Naive thymus-derived CD8-positive, alpha-beta T cell (primary cell): ENCODE measurements at regions of chr17 and their contacts with region 1.

Region 1: GRCh38 chr17:35242805-35243560 is at the start of gene SLFN5:
- DNase-seq: peak; percentile 82 to 98 (median 94)
- ATAC-seq: peak; percentile 75 to 86
- H3K4me3 Mint-ChIP-seq: peak within 1 kb of the TSS; percentile 93 to 100 (median 99)
- H3K27ac Mint-ChIP-seq: peak within 1 kb of the TSS; percentile 97 to 100 (median 99)
- H3K4me1 Mint-ChIP-seq: peaks cover 36 to 75% (median 59%) of the 10 kb centered on the region in 4 donors
- H3K27me3 Mint-ChIP-seq: no peaks in the 10 kb centered on the region
- polyA plus RNA-seq, gene SLFN5: 73.8 to 161 (median 87.4) TPM

Region 2: DNA sequence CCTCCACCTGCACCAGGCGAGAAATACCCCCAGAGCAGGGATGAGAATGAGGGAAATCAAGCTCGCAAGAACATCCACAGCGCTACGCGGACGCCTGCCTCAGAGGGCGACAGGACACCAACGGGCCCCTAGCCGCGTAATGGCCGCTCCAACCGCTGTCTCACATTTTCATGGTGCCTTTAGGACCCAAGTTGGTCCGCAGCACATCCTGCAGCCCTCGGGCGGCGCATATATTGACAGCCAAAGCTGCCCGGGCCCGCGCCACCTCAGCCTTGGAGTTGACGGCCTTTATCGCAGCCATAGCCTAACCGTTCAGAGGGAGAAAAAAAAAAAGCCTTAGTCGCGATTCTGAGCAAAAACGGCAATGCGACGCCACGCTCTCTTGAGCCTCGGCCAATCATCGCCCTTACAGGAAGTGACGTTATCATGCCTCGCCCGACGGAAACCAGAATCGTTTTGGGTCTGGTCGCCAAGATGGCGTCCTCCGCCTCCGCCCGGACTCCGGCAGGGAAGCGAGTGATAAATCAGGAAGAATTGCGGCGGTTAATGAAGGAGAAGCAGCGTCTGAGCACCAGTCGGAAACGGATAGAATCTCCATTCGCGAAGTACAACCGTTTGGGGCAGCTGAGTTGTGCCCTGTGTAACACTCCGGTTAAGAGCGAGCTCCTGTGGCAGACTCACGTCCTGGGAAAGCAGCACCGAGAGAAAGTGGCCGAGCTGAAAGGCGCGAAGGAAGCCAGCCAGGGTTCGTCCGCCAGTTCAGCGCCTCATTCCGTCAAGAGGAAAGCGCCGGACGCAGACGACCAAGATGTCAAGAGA is 281.7 kb before region 1 on chr17 and contains the starts of genes CCT6B and ZNF830:
- POLR2A ChIA-PET with region 1: no interaction called
- DNase-seq: peak; percentile 75 to 96 (median 90)
- ATAC-seq: peak; percentile 89 to 90
- H3K4me3 Mint-ChIP-seq: peak within 1 kb of the TSS; percentile 95 to 100 (median 100)
- H3K27ac Mint-ChIP-seq: peak within 1 kb of the TSS; percentile 99 to 100 (median 100)
- H3K4me1 Mint-ChIP-seq: peaks cover 31 to 34% (median 32%) of the 10 kb centered on the region in 4 donors
- H3K27me3 Mint-ChIP-seq: peaks cover 1 to 9% (median 8%) of the 10 kb centered on the region in 5 donors
- polyA plus RNA-seq, gene CCT6B: 0.35 to 2.4 (median 1.3) TPM
- polyA plus RNA-seq, gene ZNF830: 17.4 to 27.6 (median 18.7) TPM

Region 3: GRCh38 chr17:35170968-35171771 is 71.8 kb before region 1 on chr17:
- POLR2A ChIA-PET with region 1: interaction called, 102 read pairs
- DNase-seq: peak in 8 of 10 donors; percentile 13 to 79 (median 49)
- ATAC-seq: peak; percentile 79 to 87
- H3K4me3 Mint-ChIP-seq: peak overlapping the region; percentile 48 to 84 (median 60)
- H3K27ac Mint-ChIP-seq: peak overlapping the region; percentile 55 to 96 (median 91)
- H3K4me1 Mint-ChIP-seq: peaks cover 23 to 51% (median 48%) of the 10 kb centered on the region in 4 donors
- H3K27me3 Mint-ChIP-seq: no peaks in the 10 kb centered on the region

Region 4: GRCh38 chr17:35214631-35215273 is 28.2 kb before region 1 on chr17:
- POLR2A ChIA-PET with region 1: interaction called, 371 read pairs
- DNase-seq: peak in 8 of 10 donors; percentile 9 to 66 (median 26)
- ATAC-seq: peak; percentile 44 to 50
- H3K4me3 Mint-ChIP-seq: peak overlapping the region; percentile 64 to 91 (median 84)
- H3K27ac Mint-ChIP-seq: peak overlapping the region; percentile 94 to 98 (median 97)
- H3K4me1 Mint-ChIP-seq: peaks cover 47 to 89% (median 88%) of the 10 kb centered on the region in 4 donors
- H3K27me3 Mint-ChIP-seq: no peaks in the 10 kb centered on the region

Region 5: GRCh38 chr17:35286120-35286781 is 43.3 kb after region 1 on chr17:
- POLR2A ChIA-PET with region 1: interaction called, 11 read pairs
- DNase-seq: peak in 7 of 10 donors; percentile 15 to 62 (median 40)
- ATAC-seq: peak; percentile 99
- H3K4me3 Mint-ChIP-seq: peak overlapping the region; percentile 14 to 64 (median 44)
- H3K27ac Mint-ChIP-seq: peak overlapping the region; percentile 77 to 94 (median 87)
- H3K4me1 Mint-ChIP-seq: peaks cover 26 to 58% (median 50%) of the 10 kb centered on the region in 4 donors
- H3K27me3 Mint-ChIP-seq: no peaks in the 10 kb centered on the region

Region 6: DNA sequence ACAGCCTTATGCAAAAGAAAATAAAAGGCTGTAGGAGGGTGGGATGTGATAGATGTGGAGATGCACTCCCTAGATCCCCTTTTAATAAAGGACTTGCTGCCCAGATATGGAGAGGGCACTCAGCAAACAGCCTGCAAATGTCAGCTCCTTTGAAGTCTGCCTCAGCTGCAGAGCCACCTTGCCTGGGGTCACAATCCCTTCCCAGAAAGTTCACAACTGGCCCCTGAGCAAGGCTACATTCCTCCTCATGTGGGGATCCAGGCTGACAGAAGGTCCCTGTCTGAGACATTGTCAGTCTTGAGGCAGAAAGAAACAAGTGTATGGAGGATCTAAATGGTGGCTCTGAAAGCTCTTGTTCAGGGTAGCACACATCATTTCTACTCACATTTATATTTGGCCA is 94.4 kb after region 1 on chr17:
- POLR2A ChIA-PET with region 1: no interaction called
- DNase-seq: no peak
- ATAC-seq: no peak
- H3K4me3 Mint-ChIP-seq: no peak overlapping the region
- H3K27ac Mint-ChIP-seq: peak overlapping the region in 2 of 10 donors; percentile 5 to 9
- H3K4me1 Mint-ChIP-seq: peaks cover 16 to 23% (median 17%) of the 10 kb centered on the region in 4 donors
- H3K27me3 Mint-ChIP-seq: no peaks in the 10 kb centered on the region

Region 7: DNA sequence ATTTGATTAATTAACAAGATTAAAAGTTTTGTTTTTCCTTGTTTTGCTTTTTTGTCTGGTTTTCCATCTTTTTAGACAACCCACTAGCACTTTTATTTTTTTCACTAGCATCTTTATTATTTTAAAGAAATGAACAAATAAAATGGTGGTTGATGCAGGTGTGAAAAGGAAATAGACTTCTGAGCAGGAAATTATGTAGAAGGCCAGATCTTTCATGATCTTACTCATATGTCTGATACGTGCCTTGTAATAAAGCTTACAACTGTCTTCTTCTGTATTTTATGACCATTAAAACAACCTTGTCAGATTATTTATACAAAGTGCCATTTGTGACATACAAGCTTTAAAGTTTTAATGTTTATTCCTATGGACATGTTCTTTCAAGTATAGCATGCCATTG is 288.2 kb after region 1 on chr17:
- POLR2A ChIA-PET with region 1: interaction called, 77 read pairs
- DNase-seq: no peak
- ATAC-seq: no peak
- H3K4me3 Mint-ChIP-seq: peak overlapping the region in 8 of 10 donors; percentile 1 to 83 (median 46)
- H3K27ac Mint-ChIP-seq: peak overlapping the region in 8 of 10 donors; percentile 40 to 98 (median 92)
- H3K4me1 Mint-ChIP-seq: peaks cover 37 to 79% (median 69%) of the 10 kb centered on the region in 4 donors
- H3K27me3 Mint-ChIP-seq: no peaks in the 10 kb centered on the region